ENCODE measurements at regions of chr3 and their contacts with region 1.

Region 1: DNA sequence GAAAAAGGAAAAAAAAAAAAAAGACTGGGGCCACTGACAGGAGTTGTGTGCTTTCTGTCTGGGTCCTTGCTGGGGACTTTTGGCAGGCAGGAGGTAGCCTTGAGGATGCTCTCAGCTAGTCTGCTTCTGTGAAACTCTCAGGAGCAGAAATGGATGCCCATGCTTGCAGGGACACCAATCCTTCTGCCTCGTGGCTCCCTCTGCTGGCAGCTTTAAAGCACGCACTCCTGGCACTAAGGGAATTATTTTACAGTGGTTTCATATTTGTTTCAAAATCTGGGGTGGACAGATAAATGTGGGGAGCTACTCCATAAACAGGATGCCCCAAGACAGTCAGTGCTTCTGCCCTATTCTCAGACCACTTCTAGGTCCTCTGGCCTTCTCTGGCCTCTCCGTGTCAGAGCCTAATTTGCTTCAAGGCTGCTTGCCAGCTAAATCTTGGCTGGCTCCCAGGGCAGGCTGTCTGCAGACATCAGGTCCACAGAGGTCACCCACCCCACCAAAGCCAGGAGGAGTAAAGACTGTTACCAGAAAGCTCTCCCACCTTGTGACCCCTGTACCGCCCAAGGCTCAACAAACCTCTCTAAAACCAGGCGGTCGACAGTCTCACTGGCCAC is 17.1 kb downstream of the TRAIP start:
- DNase-seq: peak; percentile 56 to 70
- ATAC-seq: peak; percentile 90 to 94
- H3K4me3 ChIP-seq: no peak overlapping the region
- H3K27ac ChIP-seq: peak overlapping the region; percentile 3 to 76 (median 52)
- H3K4me1 ChIP-seq: peaks cover 9 to 18% of the 10 kb centered on the region in 2 donors
- H3K27me3 ChIP-seq: no peaks in the 10 kb centered on the region
- CTCF ChIP-seq: peak; percentile 90 to 94 (median 93)
- POLR2A ChIP-seq: no peak

Region 2: DNA sequence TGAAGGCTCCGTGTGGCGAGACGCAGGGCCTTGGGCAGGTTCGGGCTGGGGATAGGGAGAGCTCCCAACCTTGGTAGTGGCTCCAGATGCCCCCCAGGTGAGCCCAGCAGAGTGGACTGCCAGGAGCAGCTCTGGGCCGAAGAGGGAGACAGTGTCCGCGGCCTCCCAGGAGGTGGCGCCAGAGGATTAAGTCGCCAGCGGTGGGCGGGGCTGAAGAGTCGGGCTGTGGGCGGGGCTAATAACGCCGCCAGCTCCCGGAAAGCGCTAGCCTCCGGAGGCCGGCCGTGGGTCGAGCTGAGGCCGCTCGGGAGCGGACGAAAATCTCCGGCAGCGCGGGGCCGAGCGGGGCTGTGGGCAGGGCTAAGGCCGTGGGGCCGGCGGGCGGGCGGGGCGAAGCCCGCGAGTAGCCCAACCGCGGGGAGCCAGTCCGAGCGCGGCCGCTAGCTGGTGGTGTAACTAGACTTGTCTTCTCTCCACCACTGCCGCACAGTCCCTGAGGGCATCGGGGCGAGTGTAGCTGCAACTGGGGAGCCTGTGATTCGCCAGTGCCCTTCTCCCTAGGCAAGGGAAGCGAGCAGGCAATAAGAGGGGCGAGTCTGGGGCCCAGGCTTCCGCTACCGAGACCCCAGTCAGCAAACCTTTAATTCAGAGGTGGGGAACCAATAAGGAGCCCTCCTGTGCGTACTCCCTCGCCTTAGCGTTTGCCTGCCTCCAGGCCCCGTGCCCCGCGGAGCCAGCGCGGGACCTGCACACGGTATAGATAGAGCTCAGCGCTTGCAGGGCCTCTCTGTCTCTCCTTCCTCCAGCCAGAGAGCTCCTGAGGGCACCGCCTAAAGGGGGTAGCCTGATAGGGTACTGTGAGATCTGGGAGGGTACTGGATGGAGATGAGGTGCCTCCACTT is 299.4 kb before region 1 on chr3:
- in situ Hi-C with region 1: loop called in 1 of 4 experiments (anchors 25 kb)
- intact Hi-C with region 1: no loop called
- DNase-seq: peak; percentile 82 to 89
- ATAC-seq: peak; percentile 83 to 84
- H3K4me3 ChIP-seq: peak overlapping the region; percentile 49 to 83 (median 58)
- H3K27ac ChIP-seq: peak overlapping the region; percentile 79 to 93 (median 87)
- H3K4me1 ChIP-seq: peaks cover 27 to 36% of the 10 kb centered on the region in 2 donors
- H3K27me3 ChIP-seq: no peaks in the 10 kb centered on the region
- CTCF ChIP-seq: peak; percentile 86 to 96 (median 95)
- POLR2A ChIP-seq: peak; percentile 53 to 66

Region 3: GRCh38 chr3:49703443-49703927 is 135.8 kb before region 1 on chr3:
- in situ Hi-C with region 1: no loop called
- intact Hi-C with region 1: loop called (anchors 1 kb)
- DNase-seq: peak in 1 of 2 donors; percentile 75
- ATAC-seq: peak; percentile 84 to 90
- H3K4me3 ChIP-seq: no peak overlapping the region
- H3K27ac ChIP-seq: peak overlapping the region in 2 of 4 donors; percentile 32 to 68
- H3K4me1 ChIP-seq: no peaks in the 10 kb centered on the region
- H3K27me3 ChIP-seq: no peaks in the 10 kb centered on the region
- CTCF ChIP-seq: peak; percentile 75 to 84 (median 80)
- POLR2A ChIP-seq: no peak

Region 4: DNA sequence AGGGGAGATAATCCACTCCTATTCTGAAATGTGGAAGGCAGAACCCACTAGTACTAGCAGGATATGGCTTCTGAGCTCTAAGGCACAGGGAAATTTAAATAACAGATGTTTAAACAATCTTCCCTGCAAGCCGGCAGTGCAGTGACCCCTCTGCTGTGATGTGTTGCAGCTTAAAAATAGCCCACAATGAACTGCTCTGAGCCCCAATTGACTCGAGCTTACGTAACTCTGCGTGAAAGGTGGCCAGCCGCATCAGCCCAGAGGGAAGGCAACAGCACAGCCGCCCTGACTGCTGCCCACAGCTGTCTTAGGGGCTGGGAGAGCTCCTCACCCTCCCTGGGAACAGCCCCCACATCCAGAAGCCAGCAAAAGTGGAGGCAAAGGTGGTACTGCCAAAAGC is 42.9 kb after region 1 on chr3:
- in situ Hi-C with region 1: no loop called
- intact Hi-C with region 1: no loop called
- DNase-seq: no peak
- ATAC-seq: peak; percentile 54 to 78
- H3K4me3 ChIP-seq: no peak overlapping the region
- H3K27ac ChIP-seq: peak overlapping the region; percentile 48 to 66 (median 51)
- H3K4me1 ChIP-seq: peaks cover 8 to 23% of the 10 kb centered on the region in 2 donors
- H3K27me3 ChIP-seq: no peaks in the 10 kb centered on the region
- CTCF ChIP-seq: no peak
- POLR2A ChIP-seq: no peak

Region 5: GRCh38 chr3:49906004-49906743 is 66.9 kb after region 1 on chr3:
- in situ Hi-C with region 1: no loop called
- intact Hi-C with region 1: loop called (anchors 10 kb)
- DNase-seq: no peak
- ATAC-seq: peak in 1 of 2 donors; percentile 40
- H3K4me3 ChIP-seq: peak overlapping the region in 3 of 4 donors; percentile 23 to 50 (median 34)
- H3K27ac ChIP-seq: peak overlapping the region; percentile 18 to 59 (median 31)
- H3K4me1 ChIP-seq: peaks cover 4 to 11% of the 10 kb centered on the region in 2 donors
- H3K27me3 ChIP-seq: no peaks in the 10 kb centered on the region
- CTCF ChIP-seq: peak; percentile 31 to 66 (median 55)
- POLR2A ChIP-seq: no peak

Measured in gastrocnemius medialis (tissue), 4 donors.